ENCODE measurements at regions of chr14 and their contacts with region 1.

Region 1: DNA sequence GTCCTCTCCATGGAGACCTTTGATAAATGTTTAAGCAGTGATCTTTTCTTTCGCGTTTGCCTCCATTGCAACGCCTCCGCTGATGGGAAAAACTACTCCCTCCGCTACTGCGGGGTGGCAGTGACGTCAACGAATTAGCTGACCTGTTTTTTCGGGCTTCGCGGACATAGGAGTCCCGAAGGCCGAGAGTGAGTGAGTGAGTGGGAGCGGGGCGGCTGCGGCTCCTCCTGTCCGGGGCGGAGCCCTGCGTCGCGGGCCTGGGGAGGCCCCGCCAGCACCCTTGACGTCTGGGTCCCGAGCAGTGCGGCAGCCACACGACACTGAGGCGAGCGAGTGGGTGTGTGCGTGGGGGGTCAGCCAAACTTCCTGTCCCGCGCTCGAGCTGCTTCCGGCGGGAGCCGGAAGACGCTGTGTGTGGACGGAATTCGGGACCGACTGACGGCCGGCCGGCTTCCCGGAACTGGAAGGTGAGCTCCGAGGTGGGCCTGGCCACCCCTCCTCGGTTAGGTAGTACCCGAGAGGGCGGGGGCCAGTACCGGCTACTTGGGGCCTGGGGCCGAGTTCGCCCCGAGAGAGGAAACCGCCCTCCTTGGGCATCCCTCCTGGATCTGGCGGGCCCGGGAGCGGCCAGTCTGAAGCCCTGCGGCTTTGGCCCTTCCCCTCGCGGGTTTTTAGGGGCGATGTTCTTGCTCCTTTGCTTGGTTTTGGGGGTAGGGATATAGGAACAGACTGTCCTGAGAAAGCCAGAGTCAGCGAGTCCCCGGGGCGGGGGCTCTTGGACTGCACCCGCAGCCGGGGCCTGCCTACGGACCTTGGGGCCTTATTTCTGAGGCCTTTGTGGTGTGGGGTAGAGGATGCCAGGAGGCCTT is at the start of gene ZNF410:
- DNase-seq: peak; percentile 85
- H3K4me3 Mint-ChIP-seq: peak within 1 kb of the TSS; percentile 93
- H3K27ac Mint-ChIP-seq: peak within 1 kb of the TSS; percentile 98
- H3K4me1 Mint-ChIP-seq: peaks cover 54% of the 10 kb centered on the region
- H3K27me3 Mint-ChIP-seq: no peaks in the 10 kb centered on the region
- total RNA-seq, gene ZNF410: 70.1 and 71.8 TPM in 2 replicates

Region 2: DNA sequence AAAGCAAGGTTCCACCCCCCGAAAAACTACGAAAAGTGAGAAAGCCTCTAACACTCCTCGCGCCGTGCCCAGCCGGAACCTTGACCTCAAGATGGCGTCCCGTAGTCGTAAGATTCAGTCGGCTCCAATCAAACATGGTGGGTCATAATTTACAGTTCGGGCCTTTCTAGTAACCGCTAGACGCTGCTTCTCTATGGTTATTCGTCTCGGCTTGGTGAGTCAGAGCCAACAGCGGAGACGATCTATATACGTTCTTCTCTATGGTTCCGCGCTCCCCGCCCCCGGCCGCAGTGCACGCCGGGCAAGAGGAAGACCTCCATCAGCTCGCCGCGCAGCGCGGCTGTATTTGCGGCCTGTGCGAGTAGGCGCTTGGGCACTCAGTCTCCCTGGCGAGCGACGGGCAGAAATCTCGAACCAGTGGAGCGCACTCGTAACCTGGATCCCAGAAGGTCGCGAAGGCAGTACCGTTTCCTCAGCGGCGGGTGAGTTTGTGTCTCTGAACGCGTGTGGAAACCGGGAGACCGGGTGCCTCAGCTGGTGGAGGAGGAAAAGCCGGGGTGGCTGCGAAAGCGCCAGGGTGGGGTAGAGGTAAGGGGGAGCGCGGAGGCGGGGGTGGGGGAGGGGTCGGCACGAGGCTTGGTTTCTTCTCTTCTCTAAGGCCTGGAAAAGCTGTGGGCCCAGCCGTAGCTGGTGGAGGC is 828.3 kb before region 1 on chr14 and contains the start of gene RBM25:
- intact Hi-C with region 1: loop called (anchors 1 kb)
- DNase-seq: peak; percentile 94
- H3K4me3 Mint-ChIP-seq: no peak within 1 kb of the TSS
- H3K27ac Mint-ChIP-seq: no peak within 1 kb of the TSS
- H3K4me1 Mint-ChIP-seq: peaks cover 32% of the 10 kb centered on the region
- H3K27me3 Mint-ChIP-seq: no peaks in the 10 kb centered on the region
- total RNA-seq, gene RBM25: 128 and 129 TPM in 2 replicates

Region 3: GRCh38 chr14:73644531-73645247 is 242.0 kb before region 1 on chr14 and contains the start of gene DNAL1:
- intact Hi-C with region 1: loop called (anchors 2 kb)
- DNase-seq: peak; percentile 92
- H3K4me3 Mint-ChIP-seq: peak within 1 kb of the TSS; percentile 86
- H3K27ac Mint-ChIP-seq: peak within 1 kb of the TSS; percentile 71
- H3K4me1 Mint-ChIP-seq: peaks cover 15% of the 10 kb centered on the region
- H3K27me3 Mint-ChIP-seq: no peaks in the 10 kb centered on the region
- total RNA-seq, gene DNAL1: 5.3 and 8.5 TPM in 2 replicates

Region 4: GRCh38 chr14:73741386-73741875 is 145.3 kb before region 1 on chr14:
- intact Hi-C with region 1: loop called (anchors 5 kb)
- DNase-seq: peak; percentile 61
- H3K4me3 Mint-ChIP-seq: peak overlapping the region; percentile 83
- H3K27ac Mint-ChIP-seq: peak overlapping the region; percentile 86
- H3K4me1 Mint-ChIP-seq: peaks cover 62% of the 10 kb centered on the region
- H3K27me3 Mint-ChIP-seq: no peaks in the 10 kb centered on the region

Region 5: DNA sequence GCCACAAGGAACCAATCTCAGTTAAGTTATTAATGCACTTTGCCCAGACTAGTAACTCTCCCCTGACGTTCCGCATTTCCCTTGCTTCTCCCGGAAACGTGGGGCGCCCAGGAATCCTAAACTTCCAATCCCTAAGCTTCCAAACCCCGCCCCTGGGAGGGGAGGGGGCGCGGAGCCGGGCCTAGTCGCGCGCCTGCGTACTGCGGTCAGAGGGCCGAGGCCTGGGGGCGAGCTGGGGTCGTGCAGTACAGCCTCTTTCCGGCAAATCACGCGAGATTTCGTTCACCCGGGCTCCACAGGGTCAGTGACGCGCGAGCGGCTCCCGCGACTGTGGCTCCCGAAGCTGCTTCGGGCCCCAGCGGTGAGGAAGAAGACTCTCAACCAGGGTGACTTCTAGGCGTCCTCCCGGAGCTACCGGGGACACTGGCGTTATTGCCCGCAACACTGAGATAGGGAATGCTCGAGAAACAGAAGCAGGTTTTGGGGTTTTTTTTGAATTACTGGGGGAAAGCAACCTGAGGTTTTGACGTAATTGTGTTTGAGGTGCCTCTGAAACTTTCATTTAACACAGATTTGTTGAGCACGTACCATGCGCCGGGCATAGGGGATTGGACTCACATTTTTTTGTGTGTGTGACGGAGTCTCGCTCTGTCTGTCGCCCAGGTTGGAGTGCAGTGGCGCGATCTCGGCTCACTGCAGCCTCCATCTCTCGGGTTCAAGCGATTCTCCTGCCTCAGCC is 34.9 kb before region 1 on chr14 and contains the start of gene PTGR2:
- intact Hi-C with region 1: loop called (anchors 1 kb)
- DNase-seq: peak; percentile 82
- H3K4me3 Mint-ChIP-seq: peak within 1 kb of the TSS; percentile 91
- H3K27ac Mint-ChIP-seq: peak within 1 kb of the TSS; percentile 92
- H3K4me1 Mint-ChIP-seq: peaks cover 20% of the 10 kb centered on the region
- H3K27me3 Mint-ChIP-seq: peaks cover 3% of the 10 kb centered on the region
- total RNA-seq, gene PTGR2: 1.2 and 2.0 TPM in 2 replicates

Region 6: GRCh38 chr14:73862480-73862879 is 24.2 kb before region 1 on chr14:
- intact Hi-C with region 1: no loop called
- DNase-seq: no peak
- H3K4me3 Mint-ChIP-seq: no peak overlapping the region
- H3K27ac Mint-ChIP-seq: no peak overlapping the region
- H3K4me1 Mint-ChIP-seq: no peaks in the 10 kb centered on the region
- H3K27me3 Mint-ChIP-seq: no peaks in the 10 kb centered on the region

Region 7: GRCh38 chr14:74084277-74085046 is 197.8 kb after region 1 on chr14 and contains the starts of genes ALDH6A1 and LIN52:
- intact Hi-C with region 1: loop called (anchors 1 kb)
- DNase-seq: peak; percentile 100
- H3K4me3 Mint-ChIP-seq: peak within 1 kb of the TSS; percentile 94
- H3K27ac Mint-ChIP-seq: peak within 1 kb of the TSS; percentile 94
- H3K4me1 Mint-ChIP-seq: peaks cover 45% of the 10 kb centered on the region
- H3K27me3 Mint-ChIP-seq: peaks cover 4% of the 10 kb centered on the region
- total RNA-seq, gene ALDH6A1: 10.8 and 11.0 TPM in 2 replicates
- total RNA-seq, gene LIN52: 15.9 and 17.2 TPM in 2 replicates